Naive thymus-derived CD4-positive, alpha-beta T cell (primary cell): ENCODE measurements at regions of chr2 and their contacts with region 1.

Region 1: DNA sequence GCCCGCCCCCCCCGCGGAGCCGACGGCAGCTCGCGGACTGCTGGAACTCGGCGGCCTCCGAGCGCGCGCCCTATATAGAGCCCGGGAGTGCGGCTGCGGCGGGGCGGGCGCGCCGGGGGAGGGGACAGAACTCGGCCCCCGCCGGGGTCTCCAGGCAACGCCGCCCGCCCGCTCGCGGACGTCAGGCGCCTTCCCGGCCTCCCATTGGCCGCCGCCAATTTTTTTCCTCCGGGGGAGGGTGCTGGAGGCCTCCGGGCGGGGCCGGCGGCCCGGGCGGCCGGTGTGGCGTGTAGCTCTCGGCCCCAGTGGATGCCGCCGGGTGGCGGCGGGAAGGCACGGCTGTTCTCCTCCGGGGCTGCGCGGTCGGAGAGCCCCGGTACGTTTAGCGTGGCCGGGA is at the start of gene ZFP36L2:
- DNase-seq: peak; percentile 90 to 99 (median 97)
- ATAC-seq: peak; percentile 84
- H3K4me3 ChIP-seq: peak within 1 kb of the TSS; percentile 87
- H3K4me3 Mint-ChIP-seq: peak within 1 kb of the TSS; percentile 85 to 99 (median 96)
- H3K27ac ChIP-seq: peak within 1 kb of the TSS; percentile 97
- H3K27ac Mint-ChIP-seq: peak within 1 kb of the TSS; percentile 87 to 99 (median 96)
- H3K4me1 ChIP-seq: peaks cover 22% of the 10 kb centered on the region in 2 donors
- H3K4me1 Mint-ChIP-seq: peaks cover 22 to 35% (median 25%) of the 10 kb centered on the region in 7 donors
- H3K27me3 ChIP-seq: no peaks in the 10 kb centered on the region
- H3K27me3 Mint-ChIP-seq: peaks cover 0 to 4% (median 0%) of the 10 kb centered on the region in 5 donors
- total RNA-seq, gene ZFP36L2: 231 to 747 (median 389) TPM

Region 2: DNA sequence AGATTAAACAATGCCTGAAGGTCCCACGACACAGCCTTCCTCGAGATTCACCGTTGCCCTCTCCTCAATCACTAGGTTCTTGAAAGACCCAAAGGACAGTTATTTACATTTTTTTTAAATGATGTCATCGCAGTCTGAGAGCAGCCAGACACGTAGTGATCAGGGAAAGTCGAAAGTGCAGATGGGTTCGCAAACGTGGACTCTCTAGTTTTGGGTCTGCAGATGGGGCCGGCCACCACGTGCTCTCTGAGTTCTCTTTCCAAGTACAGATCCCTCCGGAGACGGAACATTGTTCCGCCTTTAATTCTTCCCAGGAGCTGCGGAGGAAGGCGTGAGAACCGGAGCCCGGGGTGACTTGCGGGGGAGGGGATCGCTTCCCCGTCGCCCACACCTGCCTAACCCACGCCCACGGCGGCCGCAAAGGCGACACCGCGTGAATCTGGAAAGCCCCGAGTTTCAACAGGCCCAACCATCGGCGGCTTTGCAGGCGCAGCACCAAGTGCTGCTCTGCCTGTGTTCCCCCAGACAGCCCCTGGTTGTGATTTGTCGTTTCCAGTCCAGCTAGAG is 1124.4 kb before region 1 on chr2:
- CTCF ChIA-PET with region 1: no interaction called
- POLR2A ChIA-PET with region 1: interaction called, 3 read pairs
- intact Hi-C with region 1: loop called in 1 of 2 experiments (anchors 5 kb)
- DNase-seq: peak; percentile 87 to 97 (median 94)
- ATAC-seq: peak; percentile 85
- H3K4me3 ChIP-seq: peak overlapping the region; percentile 44
- H3K4me3 Mint-ChIP-seq: peak overlapping the region in 8 of 10 donors; percentile 76 to 91 (median 85)
- H3K27ac ChIP-seq: peak overlapping the region; percentile 95
- H3K27ac Mint-ChIP-seq: peak overlapping the region in 2 of 9 donors; percentile 97 to 99
- H3K4me1 ChIP-seq: peaks cover 74 to 81% of the 10 kb centered on the region in 2 donors
- H3K4me1 Mint-ChIP-seq: peaks cover 37 to 69% (median 50%) of the 10 kb centered on the region in 7 donors
- H3K27me3 ChIP-seq: no peaks in the 10 kb centered on the region
- H3K27me3 Mint-ChIP-seq: no peaks in the 10 kb centered on the region

Region 3: GRCh38 chr2:42828487-42829425 is 397.8 kb before region 1 on chr2:
- CTCF ChIA-PET with region 1: interaction called, 3 read pairs
- POLR2A ChIA-PET with region 1: no interaction called
- intact Hi-C with region 1: loop called in 1 of 2 experiments (anchors 5 kb)
- DNase-seq: peak; percentile 44 to 69 (median 63)
- ATAC-seq: peak; percentile 93
- H3K4me3 ChIP-seq: no peak overlapping the region
- H3K4me3 Mint-ChIP-seq: peak overlapping the region in 6 of 10 donors; percentile 18 to 47 (median 21)
- H3K27ac ChIP-seq: no peak overlapping the region
- H3K27ac Mint-ChIP-seq: peak overlapping the region in 2 of 9 donors; percentile 21 to 25
- H3K4me1 ChIP-seq: peaks cover 3 to 6% of the 10 kb centered on the region in 2 donors
- H3K4me1 Mint-ChIP-seq: peaks cover 7 to 19% (median 14%) of the 10 kb centered on the region in 7 donors
- H3K27me3 ChIP-seq: no peaks in the 10 kb centered on the region
- H3K27me3 Mint-ChIP-seq: peaks cover 0 to 8% (median 5%) of the 10 kb centered on the region in 5 donors

Region 4: GRCh38 chr2:42917425-42917927 is 309.1 kb before region 1 on chr2:
- CTCF ChIA-PET with region 1: no interaction called
- POLR2A ChIA-PET with region 1: no interaction called
- intact Hi-C with region 1: no loop called
- DNase-seq: no peak
- ATAC-seq: no peak
- H3K4me3 ChIP-seq: no peak overlapping the region
- H3K4me3 Mint-ChIP-seq: no peak overlapping the region
- H3K27ac ChIP-seq: no peak overlapping the region
- H3K27ac Mint-ChIP-seq: no peak overlapping the region
- H3K4me1 ChIP-seq: no peaks in the 10 kb centered on the region
- H3K4me1 Mint-ChIP-seq: peaks cover 0 to 10% (median 5%) of the 10 kb centered on the region in 7 donors
- H3K27me3 ChIP-seq: no peaks in the 10 kb centered on the region
- H3K27me3 Mint-ChIP-seq: peaks cover 0 to 3% (median 0%) of the 10 kb centered on the region in 5 donors

Region 5: DNA sequence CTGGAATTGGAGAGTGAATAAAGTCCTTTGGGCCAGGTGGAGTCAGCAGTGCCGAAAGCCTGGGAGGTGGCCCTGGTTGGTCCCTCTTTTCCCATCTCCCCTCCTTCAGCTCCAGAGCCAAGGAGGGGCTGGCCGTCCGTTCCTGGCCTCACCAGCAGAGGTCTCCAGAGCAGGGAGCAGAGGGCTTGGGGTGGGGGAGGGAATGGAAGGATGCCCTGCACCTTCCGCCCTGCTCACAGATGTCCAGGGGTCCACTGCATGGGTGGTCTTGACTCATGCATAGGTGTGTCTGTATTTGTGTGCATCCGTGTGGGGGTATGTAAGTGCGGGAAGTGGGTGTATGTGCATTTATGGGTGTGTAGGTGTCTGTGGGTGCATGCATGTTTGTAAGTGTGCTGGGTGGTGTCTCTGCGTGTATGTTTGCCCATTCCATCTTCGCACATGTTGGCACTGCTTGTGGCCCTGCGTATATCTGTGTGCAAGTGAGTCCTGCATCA is 202.0 kb before region 1 on chr2:
- CTCF ChIA-PET with region 1: interaction called, 15 read pairs
- POLR2A ChIA-PET with region 1: interaction called, 22 read pairs
- intact Hi-C with region 1: loop called (anchors 1 kb)
- DNase-seq: peak in 5 of 9 donors; percentile 21 to 43 (median 25)
- ATAC-seq: peak; percentile 65
- H3K4me3 ChIP-seq: no peak overlapping the region
- H3K4me3 Mint-ChIP-seq: peak overlapping the region in 4 of 10 donors; percentile 1 to 63 (median 31)
- H3K27ac ChIP-seq: no peak overlapping the region
- H3K27ac Mint-ChIP-seq: peak overlapping the region in 7 of 9 donors; percentile 25 to 92 (median 47)
- H3K4me1 ChIP-seq: peaks cover 0 to 9% of the 10 kb centered on the region in 2 donors
- H3K4me1 Mint-ChIP-seq: peaks cover 0 to 50% (median 34%) of the 10 kb centered on the region in 7 donors
- H3K27me3 ChIP-seq: no peaks in the 10 kb centered on the region
- H3K27me3 Mint-ChIP-seq: peaks cover 0 to 9% (median 0%) of the 10 kb centered on the region in 5 donors

Region 6: DNA sequence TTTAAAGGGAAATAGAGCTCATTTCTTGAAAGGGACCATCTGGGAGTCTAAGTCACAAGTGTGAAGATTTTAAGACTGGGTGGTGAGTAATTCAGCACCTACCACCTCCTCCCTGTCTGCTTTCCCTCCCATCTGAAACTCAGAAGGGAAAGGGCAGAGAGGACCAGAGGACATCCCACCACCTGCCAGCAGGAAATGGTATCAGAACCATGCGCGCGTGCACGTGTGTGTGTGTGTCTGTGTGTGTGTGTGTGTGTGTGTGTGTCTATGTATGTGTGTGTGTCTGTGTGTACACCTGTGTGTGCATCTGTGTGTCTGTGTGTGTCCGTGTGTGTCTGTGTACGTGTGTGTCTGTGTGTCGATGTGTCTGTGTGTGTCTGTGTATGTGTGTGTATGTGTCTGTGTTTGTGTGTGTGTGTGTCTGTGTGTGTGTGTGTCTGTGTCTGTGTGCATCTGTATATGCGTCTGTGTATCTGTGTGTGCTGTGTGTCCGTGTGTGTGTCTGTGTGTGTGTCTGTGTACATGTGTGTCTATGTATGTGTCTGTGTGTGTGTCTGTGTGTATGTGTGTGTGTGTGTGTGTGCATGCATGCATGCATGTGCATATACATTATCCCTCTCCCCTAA is 77.0 kb before region 1 on chr2:
- CTCF ChIA-PET with region 1: interaction called, 14 read pairs
- POLR2A ChIA-PET with region 1: interaction called, 1,899 read pairs
- intact Hi-C with region 1: no loop called
- DNase-seq: peak in 1 of 9 donors; percentile 64
- ATAC-seq: peak; percentile 51
- H3K4me3 ChIP-seq: no peak overlapping the region
- H3K4me3 Mint-ChIP-seq: peak overlapping the region; percentile 28 to 69 (median 58)
- H3K27ac ChIP-seq: peak overlapping the region; percentile 36
- H3K27ac Mint-ChIP-seq: peak overlapping the region; percentile 82 to 96 (median 88)
- H3K4me1 ChIP-seq: peaks cover 15 to 54% of the 10 kb centered on the region in 2 donors
- H3K4me1 Mint-ChIP-seq: peaks cover 43 to 92% (median 67%) of the 10 kb centered on the region in 7 donors
- H3K27me3 ChIP-seq: no peaks in the 10 kb centered on the region
- H3K27me3 Mint-ChIP-seq: no peaks in the 10 kb centered on the region

Region 7: DNA sequence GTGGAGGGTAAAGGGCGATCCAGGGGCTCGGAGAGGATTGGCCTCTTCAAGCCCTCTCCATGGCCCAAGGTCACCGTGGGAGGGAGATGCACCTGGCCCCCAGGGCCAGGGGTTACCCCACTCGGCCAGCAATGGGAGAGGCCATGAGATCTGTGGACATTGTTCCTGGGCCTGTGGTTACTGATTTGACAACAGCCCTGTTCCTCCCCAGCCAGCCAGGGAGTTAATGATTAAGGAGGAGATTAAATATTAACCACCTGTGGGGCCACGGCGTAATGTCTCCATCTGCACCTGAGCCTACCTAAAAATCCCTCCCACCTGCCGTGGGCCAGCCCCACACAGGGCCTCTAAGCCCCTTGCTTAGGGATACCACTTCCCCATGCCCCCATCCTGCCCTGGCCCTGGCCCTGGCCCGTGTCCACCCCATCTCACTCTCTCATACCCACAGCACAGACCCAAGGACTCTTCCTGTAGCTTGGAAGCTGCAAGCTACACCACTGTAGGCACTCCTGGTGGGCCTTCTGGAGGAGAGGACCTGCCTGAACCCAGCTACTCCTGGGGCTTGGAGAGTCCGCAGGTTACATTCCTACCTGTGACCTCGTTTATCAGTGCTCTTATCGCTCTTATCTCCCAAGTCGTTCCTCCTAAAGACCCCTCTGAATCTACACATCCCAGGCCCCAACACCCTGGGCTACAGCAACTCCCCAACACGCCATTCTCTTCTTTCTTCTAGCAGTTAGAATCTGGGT is 32.3 kb before region 1 on chr2:
- CTCF ChIA-PET with region 1: interaction called, 8 read pairs
- POLR2A ChIA-PET with region 1: interaction called, 543 read pairs
- intact Hi-C with region 1: no loop called
- DNase-seq: no peak
- ATAC-seq: no peak
- H3K4me3 ChIP-seq: peak overlapping the region; percentile 80
- H3K4me3 Mint-ChIP-seq: peak overlapping the region; percentile 86 to 100 (median 92)
- H3K27ac ChIP-seq: peak overlapping the region; percentile 98
- H3K27ac Mint-ChIP-seq: peak overlapping the region; percentile 94 to 100 (median 99)
- H3K4me1 ChIP-seq: peaks cover 61 to 69% of the 10 kb centered on the region in 2 donors
- H3K4me1 Mint-ChIP-seq: peaks cover 37 to 75% (median 59%) of the 10 kb centered on the region in 7 donors
- H3K27me3 ChIP-seq: no peaks in the 10 kb centered on the region
- H3K27me3 Mint-ChIP-seq: no peaks in the 10 kb centered on the region

Region 8: DNA sequence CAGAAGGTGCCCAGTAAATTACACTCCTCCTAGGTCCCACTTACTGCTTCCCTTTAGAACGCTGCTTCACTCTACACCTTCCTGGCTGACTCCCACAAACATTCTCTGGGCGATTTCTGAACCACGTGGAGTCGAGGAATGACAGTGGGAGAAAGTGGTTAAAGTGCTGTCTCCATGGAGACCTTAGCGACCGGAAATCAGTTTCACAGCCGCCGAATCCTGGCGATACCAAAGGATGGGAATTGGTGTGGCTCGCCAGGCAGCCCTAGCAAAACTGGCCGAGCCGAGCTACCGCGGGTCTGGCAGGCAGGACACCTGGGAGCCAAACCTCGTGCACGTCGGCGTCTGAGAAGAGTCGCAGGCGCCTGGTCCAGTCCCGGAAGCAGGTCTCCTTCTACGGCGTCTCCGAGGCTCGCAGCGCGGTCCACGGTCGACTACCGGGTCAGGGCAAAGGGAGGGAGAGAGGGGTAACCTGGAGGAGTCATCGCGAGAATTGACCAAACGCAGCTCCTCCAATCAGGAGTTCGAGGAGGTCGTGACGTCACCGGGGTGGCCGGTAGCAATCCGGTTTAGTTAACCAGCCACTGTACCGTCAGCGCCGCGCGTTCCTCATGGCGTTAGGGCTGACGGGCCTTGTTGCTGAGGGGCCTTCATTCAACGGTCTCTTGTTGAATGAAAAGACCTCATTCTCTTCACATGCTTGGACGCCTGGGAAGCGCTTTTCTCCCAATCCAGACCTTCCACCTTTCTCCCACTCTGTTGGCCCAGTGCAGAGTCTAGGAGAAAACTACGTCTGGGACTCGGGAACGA is 369.3 kb after region 1 on chr2 and contains the start of gene THADA:
- CTCF ChIA-PET with region 1: no interaction called
- POLR2A ChIA-PET with region 1: interaction called, 5 read pairs
- intact Hi-C with region 1: loop called (anchors 2 kb)
- DNase-seq: peak; percentile 83 to 94 (median 91)
- ATAC-seq: peak; percentile 98
- H3K4me3 ChIP-seq: peak within 1 kb of the TSS; percentile 79
- H3K4me3 Mint-ChIP-seq: peak within 1 kb of the TSS; percentile 82 to 96 (median 94)
- H3K27ac ChIP-seq: peak within 1 kb of the TSS; percentile 87
- H3K27ac Mint-ChIP-seq: peak within 1 kb of the TSS; percentile 90 to 98 (median 97)
- H3K4me1 ChIP-seq: peaks cover 9 to 13% of the 10 kb centered on the region in 2 donors
- H3K4me1 Mint-ChIP-seq: peaks cover 23 to 48% (median 38%) of the 10 kb centered on the region in 7 donors
- H3K27me3 ChIP-seq: no peaks in the 10 kb centered on the region
- H3K27me3 Mint-ChIP-seq: peaks cover 0 to 6% (median 3%) of the 10 kb centered on the region in 5 donors
- total RNA-seq, gene THADA: 34.1 to 43.0 (median 41.0) TPM